OCI-LY7 (cell line): ENCODE measurements at regions of chr2 and their contacts with region 1.

Region 1: DNA sequence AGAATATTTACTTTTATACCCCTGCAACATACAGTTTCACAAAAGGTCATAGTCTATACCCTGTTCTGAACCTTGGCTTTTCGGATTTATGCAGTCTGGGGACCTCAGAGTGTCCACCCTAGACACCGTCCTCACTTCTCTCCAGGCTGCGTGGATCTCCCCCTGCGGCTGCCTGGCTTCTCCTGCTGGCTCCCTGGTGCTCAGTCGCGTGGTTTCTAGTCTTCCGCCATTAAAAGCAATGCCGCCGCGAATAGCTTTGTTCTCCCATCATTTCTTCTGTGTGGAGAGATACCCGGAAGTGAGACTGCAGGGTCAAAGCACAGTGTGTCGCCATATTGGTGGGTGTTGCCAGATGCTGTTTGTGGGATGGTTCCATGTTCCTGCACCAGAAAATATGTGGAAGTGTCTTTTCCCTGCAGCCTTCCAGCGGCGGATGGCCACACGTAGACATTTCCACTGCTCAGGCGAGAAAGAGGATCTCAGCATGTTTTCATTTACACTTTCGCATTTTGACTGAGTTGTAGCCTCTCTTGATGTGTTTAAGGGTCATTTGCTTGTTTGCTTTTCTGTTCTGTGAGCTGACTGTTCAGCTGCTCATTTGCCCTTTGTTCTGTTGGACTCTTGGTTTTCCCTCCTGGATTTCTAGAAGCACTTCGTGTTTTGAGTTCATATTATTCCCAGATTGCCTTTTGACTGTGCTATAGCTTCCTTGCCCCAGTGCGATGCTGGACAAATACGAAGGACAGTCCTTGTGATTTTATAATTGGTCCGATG is 22.9 kb upstream of the ASB1 start:
- DNase-seq: no peak
- H3K4me3 ChIP-seq: no peak overlapping the region
- H3K27ac ChIP-seq: no peak overlapping the region
- H3K4me1 ChIP-seq: no peaks in the 10 kb centered on the region
- CTCF ChIP-seq: no peak

Region 2: GRCh38 chr2:238426568-238427434 is 23.0 kb after region 1 on chr2 and contains the start of gene ASB1:
- CTCF ChIA-PET with region 1: no interaction called
- POLR2A ChIA-PET with region 1: no interaction called
- intact Hi-C with region 1: loop called (anchors 1 kb)
- DNase-seq: peak; percentile 93
- H3K4me3 ChIP-seq: peak within 1 kb of the TSS; percentile 94
- H3K27ac ChIP-seq: peak within 1 kb of the TSS; percentile 70
- H3K4me1 ChIP-seq: peaks cover 21% of the 10 kb centered on the region
- CTCF ChIP-seq: no peak
- total RNA-seq, gene ASB1: 18.0 and 19.4 TPM in 2 replicates